ENCODE measurements at regions of chr11 and their contacts with region 1.

Region 1: GRCh38 chr11:3807909-3808860 is at the start of gene PGAP2:
- DNase-seq: peak; percentile 92
- H3K4me3 Mint-ChIP-seq: peak within 1 kb of the TSS; percentile 99
- H3K27ac Mint-ChIP-seq: peak within 1 kb of the TSS; percentile 92
- H3K4me1 Mint-ChIP-seq: peaks cover 18% of the 10 kb centered on the region
- H3K27me3 Mint-ChIP-seq: no peaks in the 10 kb centered on the region
- total RNA-seq, gene PGAP2: 30.0 and 32.5 TPM in 2 replicates

Region 2: GRCh38 chr11:3747684-3748083 is 60.5 kb before region 1 on chr11:
- intact Hi-C with region 1: loop called (anchors 5 kb)
- DNase-seq: no peak
- H3K4me3 Mint-ChIP-seq: no peak overlapping the region
- H3K27ac Mint-ChIP-seq: no peak overlapping the region
- H3K4me1 Mint-ChIP-seq: peaks cover 5% of the 10 kb centered on the region
- H3K27me3 Mint-ChIP-seq: no peaks in the 10 kb centered on the region

Region 3: GRCh38 chr11:3781423-3781822 is 26.8 kb before region 1 on chr11:
- intact Hi-C with region 1: loop called (anchors 1 kb)
- DNase-seq: no peak
- H3K4me3 Mint-ChIP-seq: peak overlapping the region; percentile 38
- H3K27ac Mint-ChIP-seq: peak overlapping the region; percentile 71
- H3K4me1 Mint-ChIP-seq: peaks cover 46% of the 10 kb centered on the region
- H3K27me3 Mint-ChIP-seq: no peaks in the 10 kb centered on the region

Region 4: GRCh38 chr11:3797329-3798095 is 10.7 kb before region 1 on chr11 and contains the start of gene NUP98:
- intact Hi-C with region 1: loop called (anchors 1 kb)
- DNase-seq: peak; percentile 100
- H3K4me3 Mint-ChIP-seq: peak within 1 kb of the TSS; percentile 99
- H3K27ac Mint-ChIP-seq: peak within 1 kb of the TSS; percentile 99
- H3K4me1 Mint-ChIP-seq: peaks cover 35% of the 10 kb centered on the region
- H3K27me3 Mint-ChIP-seq: no peaks in the 10 kb centered on the region
- total RNA-seq, gene NUP98: 122 and 129 TPM in 2 replicates